Activated T-helper 2 cell treated with anti-CD3 and anti-CD28 coated beads, Interferon-gamma antibody, Interleukin-2, Interleukin-4, amounts not matched to agents 10 μg/mL and 5 μg/mL and 100 μg/mL, durations not matched to agents 14 hours and 24 hours and 36 hours (primary cell): ENCODE measurements at regions of chr12 and their contacts with region 1.

Region 1: GRCh38 chr12:12786716-12787601 is 1.5 kb downstream of the APOLD1 start:
- DNase-seq: peak; percentile 66
- H3K4me3 Mint-ChIP-seq: peak overlapping the region; percentile 79
- H3K27ac Mint-ChIP-seq: peak overlapping the region; percentile 87
- H3K4me1 Mint-ChIP-seq: peaks cover 34% of the 10 kb centered on the region
- H3K27me3 Mint-ChIP-seq: no peaks in the 10 kb centered on the region

Region 2: DNA sequence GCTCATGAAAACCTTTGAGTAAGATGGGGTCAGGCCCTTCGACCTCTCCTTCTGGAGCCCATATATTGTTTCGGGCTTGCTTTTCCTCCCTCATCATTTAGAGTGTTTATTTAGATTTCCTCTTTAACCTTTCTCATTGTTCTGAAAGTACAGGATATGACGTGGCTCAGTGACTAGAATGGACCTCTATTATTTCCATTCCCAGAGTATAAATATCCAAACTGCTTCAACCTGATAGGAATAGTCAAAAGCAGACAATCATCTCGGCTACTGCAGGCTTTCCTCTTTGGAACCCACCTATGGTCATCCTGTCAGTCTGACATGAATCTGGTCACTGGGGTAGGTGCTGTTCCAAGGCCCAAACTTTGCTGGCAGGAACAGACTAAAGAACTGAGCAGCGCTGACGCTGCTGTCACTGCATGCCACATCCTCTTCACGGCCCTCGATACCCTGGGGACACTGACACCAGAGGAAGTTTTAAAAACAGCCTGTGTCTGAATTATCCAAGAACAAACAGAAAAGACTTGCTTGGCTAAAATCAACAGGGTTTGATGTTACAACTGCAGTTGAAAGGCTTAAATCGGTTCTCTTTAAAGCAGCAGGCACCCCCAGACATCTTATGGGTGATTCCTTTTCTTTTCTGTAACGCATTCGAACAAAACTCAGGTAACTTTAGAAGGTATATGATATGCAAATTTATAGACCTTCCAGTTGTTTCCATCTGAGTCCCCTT is 21.2 kb after region 1 on chr12:
- intact Hi-C with region 1: loop called (anchors 1 kb)
- DNase-seq: peak; percentile 57
- H3K4me3 Mint-ChIP-seq: peak overlapping the region; percentile 44
- H3K27ac Mint-ChIP-seq: peak overlapping the region; percentile 93
- H3K4me1 Mint-ChIP-seq: peaks cover 48% of the 10 kb centered on the region
- H3K27me3 Mint-ChIP-seq: no peaks in the 10 kb centered on the region

Region 3: GRCh38 chr12:12837025-12837872 is 50.3 kb after region 1 on chr12:
- intact Hi-C with region 1: loop called (anchors 2 kb)
- DNase-seq: no peak
- H3K4me3 Mint-ChIP-seq: no peak overlapping the region
- H3K27ac Mint-ChIP-seq: peak overlapping the region; percentile 60
- H3K4me1 Mint-ChIP-seq: peaks cover 17% of the 10 kb centered on the region
- H3K27me3 Mint-ChIP-seq: no peaks in the 10 kb centered on the region

Region 4: GRCh38 chr12:12872139-12872881 is 85.4 kb after region 1 on chr12:
- intact Hi-C with region 1: no loop called
- DNase-seq: no peak
- H3K4me3 Mint-ChIP-seq: no peak overlapping the region
- H3K27ac Mint-ChIP-seq: no peak overlapping the region
- H3K4me1 Mint-ChIP-seq: no peaks in the 10 kb centered on the region
- H3K27me3 Mint-ChIP-seq: no peaks in the 10 kb centered on the region

Region 5: DNA sequence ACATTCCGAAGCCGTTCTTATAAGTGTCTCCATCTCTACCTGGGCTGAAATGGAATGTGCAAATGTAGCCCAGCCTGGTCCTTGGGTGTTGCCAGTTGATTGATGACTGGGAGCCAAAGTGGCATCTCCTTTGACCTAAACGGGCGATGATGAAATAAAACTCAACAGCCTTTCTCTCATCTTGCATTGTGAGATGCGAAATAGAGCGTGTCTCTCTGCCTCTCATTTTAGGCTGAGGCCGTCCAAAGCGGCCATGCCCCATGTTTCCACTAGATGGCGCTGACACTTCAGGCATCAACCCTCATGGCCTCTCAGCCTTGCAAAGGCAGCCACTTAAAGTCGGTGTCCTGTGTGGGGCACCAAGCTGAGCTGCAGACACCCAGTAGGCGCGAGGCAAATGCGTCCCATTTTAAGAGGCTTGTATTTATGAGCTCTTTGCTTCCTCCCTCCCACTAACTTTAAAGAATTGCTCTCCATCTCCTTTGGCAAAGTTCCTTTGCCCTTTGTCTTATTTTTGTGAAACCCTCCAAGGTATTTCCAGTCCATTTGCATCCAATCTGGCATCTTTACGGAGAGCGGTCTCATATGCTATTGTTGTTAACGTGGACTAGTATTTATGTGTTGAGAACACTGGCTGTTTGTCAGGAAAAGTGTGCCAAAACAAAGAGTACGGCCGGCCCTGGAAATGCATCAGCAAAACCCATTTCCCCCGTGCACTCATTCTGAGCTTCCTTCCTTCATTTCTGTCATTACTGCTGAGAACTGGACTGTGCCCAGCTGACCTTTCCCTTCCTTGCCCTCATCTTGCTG is 129.4 kb after region 1 on chr12:
- intact Hi-C with region 1: loop called (anchors 2 kb)
- DNase-seq: peak; percentile 76
- H3K4me3 Mint-ChIP-seq: no peak overlapping the region
- H3K27ac Mint-ChIP-seq: no peak overlapping the region
- H3K4me1 Mint-ChIP-seq: peaks cover 10% of the 10 kb centered on the region
- H3K27me3 Mint-ChIP-seq: peaks cover 18% of the 10 kb centered on the region

Region 6: DNA sequence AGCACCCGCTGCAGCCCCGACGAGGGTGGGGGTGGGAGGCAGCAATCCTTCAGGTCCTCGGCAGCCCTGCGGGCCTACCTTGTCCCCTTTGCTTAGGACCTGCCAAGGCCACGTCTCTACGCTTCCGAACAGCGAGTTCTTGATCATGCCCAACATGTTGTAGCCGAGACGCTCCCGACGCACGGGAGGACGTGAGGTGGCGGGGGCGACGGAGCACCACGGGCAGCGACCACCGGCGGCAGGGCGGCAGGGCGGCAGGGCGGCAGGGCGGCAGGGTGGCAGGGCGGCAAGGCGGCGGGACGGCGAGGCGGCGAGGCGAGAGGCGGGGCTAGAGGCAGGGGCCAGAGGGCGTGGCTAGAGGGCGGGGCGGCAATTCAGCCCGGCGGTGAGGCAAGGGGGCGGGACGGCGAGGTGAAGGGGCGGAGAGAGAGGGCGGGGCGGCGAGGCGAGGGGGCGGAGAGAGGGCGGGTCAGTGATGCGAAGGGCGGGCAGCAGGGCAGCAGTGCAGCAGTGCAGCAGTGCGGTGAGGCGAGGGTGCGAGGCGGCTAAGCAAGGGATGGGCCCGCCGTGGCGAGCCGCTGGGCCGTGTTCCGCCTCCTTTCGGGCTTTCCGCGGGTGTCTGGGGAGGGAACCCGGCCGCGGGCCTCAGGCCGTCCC is 213.1 kb after region 1 on chr12 and contains the start of gene HEBP1:
- intact Hi-C with region 1: loop called (anchors 5 kb)
- DNase-seq: peak; percentile 92
- H3K4me3 Mint-ChIP-seq: peak within 1 kb of the TSS; percentile 82
- H3K27ac Mint-ChIP-seq: peak within 1 kb of the TSS; percentile 26
- H3K4me1 Mint-ChIP-seq: peaks cover 23% of the 10 kb centered on the region
- H3K27me3 Mint-ChIP-seq: peaks cover 30% of the 10 kb centered on the region
- total RNA-seq, gene HEBP1: 11.9 and 13.3 TPM in 2 replicates

Region 7: DNA sequence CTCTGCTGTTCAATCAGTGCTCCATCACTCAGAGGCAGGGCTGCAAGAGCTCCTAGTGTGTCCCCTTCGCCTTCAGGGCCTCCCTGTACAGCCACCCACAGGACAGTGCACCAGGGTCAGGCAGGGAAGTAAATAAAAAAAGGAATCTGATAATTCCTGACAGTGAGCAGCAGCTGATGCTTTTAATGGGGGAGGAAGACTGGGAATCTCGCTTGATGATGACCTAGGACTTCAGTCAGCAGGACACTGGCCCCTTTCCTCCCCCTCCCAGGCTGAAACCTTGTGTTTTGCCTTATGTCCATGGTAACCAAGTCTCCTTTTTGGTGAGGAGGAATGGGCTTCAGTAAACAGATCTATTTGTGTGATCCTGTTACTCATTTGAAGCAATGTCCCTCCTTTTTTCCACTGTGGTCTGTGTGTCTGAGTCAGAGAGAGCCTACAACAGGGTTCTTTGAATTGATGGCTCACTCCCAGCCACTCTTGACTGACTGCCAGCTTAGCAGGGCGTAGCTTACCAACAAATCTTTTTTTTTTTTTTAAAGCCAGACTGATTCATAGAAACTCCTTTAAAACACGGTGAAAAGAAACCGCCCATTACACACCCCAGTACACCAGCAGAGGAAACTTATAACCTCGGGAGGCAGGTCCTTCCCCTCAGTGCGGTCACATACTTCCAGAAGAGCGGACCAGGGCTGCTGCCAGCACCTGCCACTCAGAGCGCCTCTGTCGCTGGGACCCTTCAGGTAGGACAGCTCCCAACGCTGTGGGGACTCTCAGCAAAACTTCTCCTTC is 409.4 kb after region 1 on chr12 and contains the start of gene EMP1:
- intact Hi-C with region 1: loop called (anchors 5 kb)
- DNase-seq: peak; percentile 65
- H3K4me3 Mint-ChIP-seq: peak within 1 kb of the TSS; percentile 78
- H3K27ac Mint-ChIP-seq: peak within 1 kb of the TSS; percentile 79
- H3K4me1 Mint-ChIP-seq: peaks cover 24% of the 10 kb centered on the region
- H3K27me3 Mint-ChIP-seq: peaks cover 25% of the 10 kb centered on the region
- total RNA-seq, gene EMP1: 9.5 and 10.2 TPM in 2 replicates